CD4-positive, alpha-beta memory T cell (primary cell): ENCODE measurements at regions of chr10 and their contacts with region 1.

Region 1: DNA sequence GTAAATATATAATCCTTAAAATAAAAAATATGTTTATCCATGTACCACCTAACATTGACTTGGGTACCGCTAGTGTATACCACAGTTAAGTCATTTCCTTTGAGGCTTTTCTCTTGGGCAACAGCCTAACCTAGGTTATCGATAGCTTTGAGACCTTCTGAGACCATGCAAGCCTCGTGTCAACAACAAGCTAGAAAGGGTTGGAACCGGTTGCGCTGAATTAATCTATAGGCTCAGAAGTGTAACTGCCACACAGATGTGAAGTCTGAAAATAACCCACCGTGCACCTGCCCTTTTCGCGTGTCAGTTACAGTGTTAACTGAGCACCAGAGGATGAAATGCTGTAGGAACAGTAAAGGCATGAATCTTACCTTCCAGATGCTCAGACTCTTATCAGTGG is 59.8 kb downstream of the ARID5B start:
- DNase-seq: peak; percentile 46 to 54 (median 51)
- H3K4me3 ChIP-seq: no peak overlapping the region
- H3K4me3 Mint-ChIP-seq: peak overlapping the region in 7 of 8 donors; percentile 42 to 73 (median 53)
- H3K27ac ChIP-seq: no peak overlapping the region
- H3K27ac Mint-ChIP-seq: peak overlapping the region; percentile 78 to 95 (median 85)
- H3K4me1 ChIP-seq: peaks cover 68% of the 10 kb centered on the region
- H3K4me1 Mint-ChIP-seq: peaks cover 54 to 67% (median 61%) of the 10 kb centered on the region in 4 donors
- H3K27me3 ChIP-seq: no peaks in the 10 kb centered on the region
- H3K27me3 Mint-ChIP-seq: no peaks in the 10 kb centered on the region

Region 2: DNA sequence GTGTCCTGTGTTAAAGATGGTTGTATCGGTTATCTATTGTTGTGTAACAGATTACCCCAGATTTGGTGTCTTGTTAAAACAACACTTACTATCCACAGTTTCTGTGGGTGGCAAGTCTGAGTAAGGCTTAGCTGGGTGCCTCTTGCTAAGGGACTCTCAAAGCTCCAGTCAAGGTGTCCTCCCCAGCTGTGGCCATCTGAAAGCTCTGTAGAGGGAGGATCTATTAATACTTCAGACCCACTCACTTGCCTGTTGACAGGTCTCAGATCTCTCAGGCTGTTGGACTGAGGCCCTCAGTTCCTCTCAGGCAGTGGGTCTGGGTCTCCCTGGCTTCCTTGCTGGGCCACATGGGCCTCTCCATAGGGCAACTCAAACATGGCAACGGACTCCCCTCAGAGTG is 40.1 kb before region 1 on chr10:
- CTCF ChIA-PET with region 1: no interaction called
- POLR2A ChIA-PET with region 1: no interaction called
- intact Hi-C with region 1: no loop called
- DNase-seq: no peak
- H3K4me3 ChIP-seq: no peak overlapping the region
- H3K4me3 Mint-ChIP-seq: no peak overlapping the region
- H3K27ac ChIP-seq: no peak overlapping the region
- H3K27ac Mint-ChIP-seq: peak overlapping the region in 4 of 7 donors; percentile 8 to 52 (median 48)
- H3K4me1 ChIP-seq: peaks cover 47% of the 10 kb centered on the region
- H3K4me1 Mint-ChIP-seq: peaks cover 38 to 74% (median 50%) of the 10 kb centered on the region in 4 donors
- H3K27me3 ChIP-seq: no peaks in the 10 kb centered on the region
- H3K27me3 Mint-ChIP-seq: no peaks in the 10 kb centered on the region

Region 3: GRCh38 chr10:61974601-61975390 is 13.5 kb after region 1 on chr10:
- CTCF ChIA-PET with region 1: no interaction called
- POLR2A ChIA-PET with region 1: interaction called, 11 read pairs
- intact Hi-C with region 1: no loop called
- DNase-seq: no peak
- H3K4me3 ChIP-seq: no peak overlapping the region
- H3K4me3 Mint-ChIP-seq: no peak overlapping the region
- H3K27ac ChIP-seq: no peak overlapping the region
- H3K27ac Mint-ChIP-seq: peak overlapping the region in 1 of 7 donors; percentile 62
- H3K4me1 ChIP-seq: peaks cover 10% of the 10 kb centered on the region
- H3K4me1 Mint-ChIP-seq: peaks cover 13 to 29% (median 24%) of the 10 kb centered on the region in 4 donors
- H3K27me3 ChIP-seq: no peaks in the 10 kb centered on the region
- H3K27me3 Mint-ChIP-seq: no peaks in the 10 kb centered on the region

Region 4: GRCh38 chr10:61987951-61988379 is 26.7 kb after region 1 on chr10:
- CTCF ChIA-PET with region 1: no interaction called
- POLR2A ChIA-PET with region 1: interaction called, 8 read pairs
- intact Hi-C with region 1: loop called (anchors 2 kb)
- DNase-seq: peak in 4 of 5 donors; percentile 48 to 56 (median 50)
- H3K4me3 ChIP-seq: peak overlapping the region in 1 of 2 donors; percentile 6
- H3K4me3 Mint-ChIP-seq: peak overlapping the region; percentile 34 to 77 (median 60)
- H3K27ac ChIP-seq: peak overlapping the region; percentile 47
- H3K27ac Mint-ChIP-seq: peak overlapping the region; percentile 88 to 96 (median 92)
- H3K4me1 ChIP-seq: peaks cover 69% of the 10 kb centered on the region
- H3K4me1 Mint-ChIP-seq: peaks cover 52 to 81% (median 67%) of the 10 kb centered on the region in 4 donors
- H3K27me3 ChIP-seq: no peaks in the 10 kb centered on the region
- H3K27me3 Mint-ChIP-seq: no peaks in the 10 kb centered on the region